GM10248 (cell line): ENCODE measurements at regions of chr1 and their contacts with region 1.

Region 1: DNA sequence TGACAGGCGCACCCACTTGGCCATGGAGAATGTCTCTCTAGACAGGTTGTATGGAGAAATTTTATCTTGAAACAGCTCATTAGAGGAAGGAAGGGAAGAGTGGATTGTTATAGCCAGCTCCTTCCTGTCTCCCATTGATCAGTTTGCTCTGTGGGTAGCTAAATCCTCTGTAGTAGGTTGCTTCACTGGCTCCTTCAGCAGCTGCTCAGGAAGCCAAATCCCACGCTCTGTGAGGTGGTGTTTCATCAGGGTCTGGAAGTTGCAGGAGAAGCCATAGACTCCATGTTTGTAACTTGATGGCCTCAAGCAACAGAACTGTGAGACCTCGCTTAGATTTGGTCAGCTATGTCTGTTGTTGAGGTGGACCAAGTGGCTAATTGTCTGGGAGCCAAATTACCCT is 6.8 kb upstream of the NFYC start:
- DNase-seq: no peak
- CTCF ChIP-seq: no peak

Region 2: GRCh38 chr1:40668769-40669525 is 15.7 kb before region 1 on chr1:
- CTCF ChIA-PET with region 1: interaction called, 34 read pairs
- POLR2A ChIA-PET with region 1: no interaction called
- DNase-seq: peak; percentile 89
- CTCF ChIP-seq: peak; percentile 93

Region 3: GRCh38 chr1:40862008-40862863 is 177.6 kb after region 1 on chr1 and contains the start of gene CITED4:
- CTCF ChIA-PET with region 1: no interaction called
- POLR2A ChIA-PET with region 1: no interaction called
- DNase-seq: peak; percentile 98
- CTCF ChIP-seq: peak; percentile 2